ENCODE measurements at regions of chr6 and their contacts with region 1.

Region 1: GRCh38 chr6:134938896-134939295 is 11.0 kb downstream of the ALDH8A1 start:
- DNase-seq: peak; percentile 93
- ATAC-seq: peak; percentile 99
- H3K4me3 Mint-ChIP-seq: no peak overlapping the region
- H3K27ac Mint-ChIP-seq: peak overlapping the region; percentile 43
- H3K4me1 Mint-ChIP-seq: peaks cover 25% of the 10 kb centered on the region
- H3K27me3 Mint-ChIP-seq: no peaks in the 10 kb centered on the region
- CTCF ChIP-seq: no peak

Region 2: DNA sequence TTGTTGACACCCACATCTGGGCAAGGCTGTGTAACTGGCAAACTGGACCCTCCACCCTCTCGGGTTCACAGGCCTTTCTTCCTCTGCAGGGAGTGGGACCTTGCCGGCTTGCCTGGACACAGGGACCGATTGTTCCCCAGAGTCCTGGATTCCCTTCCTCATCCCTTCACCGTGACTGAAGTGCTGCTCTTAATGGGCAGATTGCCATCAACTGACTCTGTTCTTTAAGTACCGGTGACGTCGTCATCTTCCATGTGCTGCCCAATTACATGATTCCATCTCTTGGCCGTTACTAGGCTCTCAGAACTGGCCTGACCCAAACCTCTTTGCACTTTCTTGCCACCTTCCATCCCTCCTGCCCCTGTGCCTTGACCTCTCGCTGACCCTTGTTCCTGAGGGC is 1612.3 kb before region 1 on chr6:
- CTCF ChIA-PET with region 1: no interaction called
- POLR2A ChIA-PET with region 1: no interaction called
- intact Hi-C with region 1: no loop called
- DNase-seq: no peak
- ATAC-seq: no peak
- H3K4me3 Mint-ChIP-seq: no peak overlapping the region
- H3K27ac Mint-ChIP-seq: no peak overlapping the region
- H3K4me1 Mint-ChIP-seq: no peaks in the 10 kb centered on the region
- H3K27me3 Mint-ChIP-seq: no peaks in the 10 kb centered on the region
- CTCF ChIP-seq: no peak

Region 3: DNA sequence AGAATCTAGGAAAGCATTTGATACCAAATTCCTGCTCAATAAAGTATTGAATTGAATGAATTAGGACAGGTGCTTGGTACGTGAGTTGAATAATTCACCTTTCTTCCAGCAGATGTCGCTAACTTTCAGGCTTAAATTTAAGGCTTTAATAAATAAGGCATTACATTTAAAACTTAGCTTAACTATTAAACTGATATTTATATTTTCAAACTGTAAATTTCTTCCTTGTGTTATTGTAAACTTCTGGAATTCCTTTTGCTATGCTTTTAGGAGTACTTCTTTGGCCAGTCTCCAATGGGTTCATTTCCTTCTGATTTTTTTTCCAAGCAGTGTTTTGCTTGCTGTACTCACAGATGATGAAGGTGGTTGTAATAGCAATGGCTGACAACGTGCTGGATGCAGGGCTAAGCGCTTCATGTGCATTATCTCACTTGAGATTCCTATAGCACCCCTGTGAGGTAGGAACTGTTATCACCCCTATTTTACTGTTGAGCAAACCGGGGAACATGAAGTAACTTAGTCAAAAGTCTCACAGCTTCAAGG is 815.2 kb before region 1 on chr6:
- CTCF ChIA-PET with region 1: interaction called, 23 read pairs
- POLR2A ChIA-PET with region 1: no interaction called
- intact Hi-C with region 1: no loop called
- DNase-seq: peak; percentile 30
- ATAC-seq: peak; percentile 90
- H3K4me3 Mint-ChIP-seq: no peak overlapping the region
- H3K27ac Mint-ChIP-seq: no peak overlapping the region
- H3K4me1 Mint-ChIP-seq: peaks cover 2% of the 10 kb centered on the region
- H3K27me3 Mint-ChIP-seq: no peaks in the 10 kb centered on the region
- CTCF ChIP-seq: peak; percentile 91

Region 4: GRCh38 chr6:134161036-134161435 is 777.9 kb before region 1 on chr6:
- CTCF ChIA-PET with region 1: interaction called, 34 read pairs
- POLR2A ChIA-PET with region 1: no interaction called
- intact Hi-C with region 1: loop called (anchors 5 kb)
- DNase-seq: no peak
- ATAC-seq: no peak
- H3K4me3 Mint-ChIP-seq: no peak overlapping the region
- H3K27ac Mint-ChIP-seq: no peak overlapping the region
- H3K4me1 Mint-ChIP-seq: no peaks in the 10 kb centered on the region
- H3K27me3 Mint-ChIP-seq: no peaks in the 10 kb centered on the region
- CTCF ChIP-seq: no peak

Region 5: GRCh38 chr6:134640975-134641429 is 297.9 kb before region 1 on chr6:
- CTCF ChIA-PET with region 1: interaction called, 21 read pairs
- POLR2A ChIA-PET with region 1: no interaction called
- intact Hi-C with region 1: loop called (anchors 10 kb)
- DNase-seq: peak; percentile 86
- ATAC-seq: peak; percentile 94
- H3K4me3 Mint-ChIP-seq: no peak overlapping the region
- H3K27ac Mint-ChIP-seq: no peak overlapping the region
- H3K4me1 Mint-ChIP-seq: peaks cover 15% of the 10 kb centered on the region
- H3K27me3 Mint-ChIP-seq: no peaks in the 10 kb centered on the region
- CTCF ChIP-seq: peak; percentile 94

Region 6: DNA sequence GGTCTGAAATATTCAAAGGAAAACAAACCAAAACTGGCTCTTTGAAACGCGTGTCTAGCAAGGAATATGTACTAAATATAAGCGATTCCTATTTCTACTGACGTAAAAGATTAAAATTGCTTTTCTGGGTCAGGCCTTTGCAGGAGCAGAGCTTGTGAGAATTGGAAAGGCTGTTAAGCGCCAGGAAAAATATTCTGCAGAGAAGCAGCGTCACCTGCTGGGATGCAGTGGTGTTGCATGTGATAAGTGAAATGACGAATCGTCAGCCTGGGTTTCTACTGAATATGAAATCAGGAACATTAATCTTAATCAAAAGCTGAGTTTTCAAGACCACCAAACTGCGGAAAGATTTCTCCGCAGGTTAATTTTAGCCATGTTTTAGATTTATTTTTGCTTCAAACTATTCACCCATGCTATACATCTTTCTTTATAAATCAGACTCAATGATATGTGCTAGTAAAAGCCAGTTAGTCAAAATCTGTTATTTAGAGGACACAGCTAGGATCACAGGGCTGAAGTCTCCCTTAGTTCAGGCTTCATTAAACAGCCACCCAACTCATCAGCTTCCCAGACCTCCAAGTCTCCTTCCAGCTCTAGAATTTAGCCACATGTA is 56.4 kb before region 1 on chr6:
- CTCF ChIA-PET with region 1: interaction called, 26 read pairs
- POLR2A ChIA-PET with region 1: interaction called, 3 read pairs
- intact Hi-C with region 1: no loop called
- DNase-seq: peak; percentile 62
- ATAC-seq: peak; percentile 42
- H3K4me3 Mint-ChIP-seq: no peak overlapping the region
- H3K27ac Mint-ChIP-seq: no peak overlapping the region
- H3K4me1 Mint-ChIP-seq: no peaks in the 10 kb centered on the region
- H3K27me3 Mint-ChIP-seq: peaks cover 2% of the 10 kb centered on the region
- CTCF ChIP-seq: peak; percentile 67

Region 7: DNA sequence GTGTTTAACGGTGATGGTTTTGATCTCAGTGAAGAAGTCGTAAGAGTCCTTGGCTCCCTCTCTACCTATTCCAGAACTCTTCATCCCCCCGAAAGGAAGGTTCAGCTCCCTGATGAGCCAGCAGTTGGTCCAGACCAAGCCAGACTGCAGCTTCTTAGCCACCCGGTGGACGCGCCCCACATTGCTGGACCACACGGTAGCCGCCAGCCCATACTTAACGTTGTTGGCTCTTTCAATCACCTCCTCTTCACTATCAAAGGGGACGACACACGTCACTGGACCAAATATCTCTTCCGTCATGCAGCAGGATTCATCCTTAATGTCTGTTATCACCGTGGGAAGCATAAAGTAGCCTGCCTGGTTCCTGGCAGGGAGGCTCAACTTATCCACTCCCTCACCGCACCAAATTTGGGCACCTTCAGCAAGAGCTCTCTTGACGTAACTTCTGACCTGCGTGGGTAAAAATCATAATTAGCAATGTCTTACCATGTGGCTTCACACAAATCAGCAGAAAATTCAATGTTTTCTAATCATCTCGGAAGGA is 20.4 kb before region 1 on chr6:
- CTCF ChIA-PET with region 1: interaction called, 12 read pairs
- POLR2A ChIA-PET with region 1: no interaction called
- intact Hi-C with region 1: no loop called
- DNase-seq: no peak
- ATAC-seq: no peak
- H3K4me3 Mint-ChIP-seq: no peak overlapping the region
- H3K27ac Mint-ChIP-seq: no peak overlapping the region
- H3K4me1 Mint-ChIP-seq: no peaks in the 10 kb centered on the region
- H3K27me3 Mint-ChIP-seq: no peaks in the 10 kb centered on the region
- CTCF ChIP-seq: no peak

Region 8: GRCh38 chr6:134949927-134950326 is 11.0 kb after region 1 on chr6 and contains the start of gene ALDH8A1:
- CTCF ChIA-PET with region 1: interaction called, 11 read pairs
- POLR2A ChIA-PET with region 1: interaction called, 4 read pairs
- intact Hi-C with region 1: no loop called
- DNase-seq: no peak
- ATAC-seq: no peak
- H3K4me3 Mint-ChIP-seq: no peak within 1 kb of the TSS
- H3K27ac Mint-ChIP-seq: no peak within 1 kb of the TSS
- H3K4me1 Mint-ChIP-seq: no peaks in the 10 kb centered on the region
- H3K27me3 Mint-ChIP-seq: no peaks in the 10 kb centered on the region
- CTCF ChIP-seq: no peak
- total RNA-seq, gene ALDH8A1: 1.2 to 1.6 TPM

Measured in activated CD8-positive, alpha-beta T cell treated with anti-CD3 and anti-CD28 coated beads for 36 hours (primary cell).